ENCODE measurements at regions of chr11 and their contacts with region 1.

Region 1: GRCh38 chr11:72080256-72080974 is at the starts of genes LRRC51 and NUMA1:
- DNase-seq: peak; percentile 100
- ATAC-seq: peak; percentile 93
- H3K4me3 ChIP-seq: peak within 1 kb of the TSS; percentile 86
- H3K27ac ChIP-seq: peak within 1 kb of the TSS; percentile 69
- H3K4me1 ChIP-seq: peaks cover 31% of the 10 kb centered on the region
- H3K27me3 ChIP-seq: no peaks in the 10 kb centered on the region
- CTCF ChIP-seq: no peak
- total RNA-seq, gene LRRC51: 5.8 and 6.6 TPM in 2 replicates
- total RNA-seq, gene NUMA1: 145 and 202 TPM in 2 replicates

Region 2: GRCh38 chr11:72024069-72024754 is 56.2 kb before region 1 on chr11:
- CTCF ChIA-PET with region 1: interaction called, 7 read pairs
- POLR2A ChIA-PET with region 1: no interaction called
- intact Hi-C with region 1: loop called (anchors 2 kb)
- DNase-seq: no peak
- ATAC-seq: no peak
- H3K4me3 ChIP-seq: no peak overlapping the region
- H3K27ac ChIP-seq: no peak overlapping the region
- H3K4me1 ChIP-seq: peaks cover 16% of the 10 kb centered on the region
- H3K27me3 ChIP-seq: no peaks in the 10 kb centered on the region
- CTCF ChIP-seq: no peak

Region 3: GRCh38 chr11:72040726-72041441 is 39.5 kb before region 1 on chr11:
- CTCF ChIA-PET with region 1: interaction called, 6 read pairs
- POLR2A ChIA-PET with region 1: interaction called, 5 read pairs
- intact Hi-C with region 1: loop called (anchors 1 kb)
- DNase-seq: peak; percentile 96
- ATAC-seq: peak; percentile 64
- H3K4me3 ChIP-seq: peak overlapping the region; percentile 67
- H3K27ac ChIP-seq: peak overlapping the region; percentile 83
- H3K4me1 ChIP-seq: peaks cover 42% of the 10 kb centered on the region
- H3K27me3 ChIP-seq: no peaks in the 10 kb centered on the region
- CTCF ChIP-seq: 0 out of 2 replicates have a peak, but pooled peaks have one; percentile 14

Region 4: GRCh38 chr11:72102946-72103753 is 22.7 kb after region 1 on chr11 and contains the start of gene LAMTOR1:
- CTCF ChIA-PET with region 1: no interaction called
- POLR2A ChIA-PET with region 1: no interaction called
- intact Hi-C with region 1: loop called (anchors 1 kb)
- DNase-seq: peak; percentile 99
- ATAC-seq: peak; percentile 94
- H3K4me3 ChIP-seq: peak within 1 kb of the TSS; percentile 83
- H3K27ac ChIP-seq: peak within 1 kb of the TSS; percentile 81
- H3K4me1 ChIP-seq: peaks cover 18% of the 10 kb centered on the region
- H3K27me3 ChIP-seq: no peaks in the 10 kb centered on the region
- CTCF ChIP-seq: peak; percentile 47; the same call in 1 of the 2 replicates
- total RNA-seq, gene LAMTOR1: 160 and 169 TPM in 2 replicates

Region 5: DNA sequence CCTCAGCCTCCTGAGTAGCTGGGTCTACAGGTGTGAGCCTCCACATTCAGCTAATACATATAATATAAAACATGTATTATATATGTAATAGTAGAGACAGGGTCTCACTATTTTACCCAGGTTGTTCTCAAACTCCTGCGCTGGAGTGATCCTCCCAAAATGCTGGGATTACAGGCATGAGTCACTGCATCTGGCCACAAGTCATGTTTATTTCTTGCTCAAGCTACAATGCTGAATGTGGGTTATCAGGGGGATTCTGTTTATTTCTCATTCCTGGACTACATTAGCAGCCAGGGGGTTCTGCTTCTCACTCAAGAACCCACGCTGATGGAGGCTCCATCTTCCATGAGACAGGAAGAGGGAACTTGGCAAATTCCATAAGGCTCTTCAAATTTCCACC is 79.9 kb after region 1 on chr11:
- CTCF ChIA-PET with region 1: no interaction called
- POLR2A ChIA-PET with region 1: no interaction called
- intact Hi-C with region 1: no loop called
- DNase-seq: no peak
- ATAC-seq: no peak
- H3K4me3 ChIP-seq: no peak overlapping the region
- H3K27ac ChIP-seq: no peak overlapping the region
- H3K4me1 ChIP-seq: no peaks in the 10 kb centered on the region
- H3K27me3 ChIP-seq: peaks cover 30% of the 10 kb centered on the region; the same call in 1 of the 2 replicates
- CTCF ChIP-seq: no peak

Region 6: DNA sequence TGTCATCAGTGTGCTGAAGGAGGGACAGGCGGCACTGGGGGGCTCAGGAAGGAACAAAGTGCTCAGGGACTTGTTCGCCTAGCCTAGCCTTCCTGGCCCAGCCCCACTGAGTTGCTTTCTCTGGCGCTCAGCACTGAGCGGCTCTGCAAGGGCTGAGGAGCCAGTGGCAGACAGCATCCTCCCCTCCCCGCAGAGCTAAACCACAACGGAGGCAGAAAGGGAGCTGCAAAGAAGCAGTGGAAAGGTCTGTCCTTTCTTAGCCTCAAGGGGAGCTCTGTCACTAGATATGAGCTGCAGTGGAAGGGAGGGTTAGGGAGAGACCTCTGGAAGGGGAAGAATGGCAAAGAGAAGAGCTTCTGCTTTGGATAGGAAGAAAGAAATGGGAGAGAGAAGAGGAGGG is 253.2 kb after region 1 on chr11:
- CTCF ChIA-PET with region 1: no interaction called
- POLR2A ChIA-PET with region 1: no interaction called
- intact Hi-C with region 1: no loop called
- DNase-seq: no peak
- ATAC-seq: no peak
- H3K4me3 ChIP-seq: no peak overlapping the region
- H3K27ac ChIP-seq: no peak overlapping the region
- H3K4me1 ChIP-seq: no peaks in the 10 kb centered on the region
- H3K27me3 ChIP-seq: no peaks in the 10 kb centered on the region
- CTCF ChIP-seq: no peak